Right ventricle myocardium superior (tissue), 1 donor: ENCODE measurements at regions of chr1 and their contacts with region 1.

Region 1: GRCh38 chr1:51044834-51045233 is 57.2 kb upstream of the C1orf185 start:
- DNase-seq: no peak
- ATAC-seq: no peak

Region 2: DNA sequence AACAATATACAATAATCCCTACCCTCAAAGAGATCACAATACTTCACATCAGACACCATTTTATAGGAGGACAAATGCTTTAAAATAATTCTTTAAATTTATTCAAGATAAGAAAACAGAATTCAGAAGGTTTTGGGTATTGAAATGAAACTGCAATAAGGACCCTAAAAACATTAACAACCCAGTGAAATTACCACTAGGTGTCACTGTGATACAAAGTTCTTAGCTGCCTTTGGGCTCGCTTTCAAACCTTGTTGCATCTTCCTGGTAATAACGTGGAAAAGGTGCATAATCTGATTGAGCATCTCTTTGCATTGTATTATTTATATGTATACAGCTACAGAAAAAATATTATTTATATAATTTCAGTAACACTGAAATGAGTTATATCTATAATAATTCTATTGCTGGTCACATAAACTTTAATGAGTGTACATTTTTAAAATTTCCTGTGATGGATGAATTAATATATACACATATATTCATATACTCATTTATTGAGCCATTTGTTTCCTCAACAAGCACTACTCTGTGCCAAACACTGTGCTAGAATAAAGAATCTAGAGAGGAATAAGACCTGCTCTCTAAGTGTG is 270.0 kb before region 1 on chr1:
- intact Hi-C with region 1: loop called (anchors 5 kb)
- DNase-seq: no peak
- ATAC-seq: peak; percentile 61

Region 3: DNA sequence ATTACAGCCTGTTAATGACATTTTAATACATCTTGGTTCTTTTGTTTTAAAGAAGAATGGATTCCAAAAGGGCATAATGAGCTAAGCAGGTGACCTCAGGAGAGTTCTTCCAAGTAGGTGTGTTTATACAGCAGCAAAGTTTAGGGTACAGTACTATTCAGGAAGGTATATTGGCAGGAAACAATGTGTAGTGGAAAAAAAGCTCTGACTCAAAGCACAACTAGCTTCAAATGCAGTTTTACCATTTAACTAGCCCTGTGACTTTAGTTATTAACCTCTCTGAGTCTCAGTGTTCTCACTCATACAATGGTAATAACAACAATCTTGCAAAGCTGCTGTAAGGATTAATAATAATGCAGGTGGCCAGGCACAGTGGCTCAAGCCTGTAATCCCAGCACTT is 114.6 kb before region 1 on chr1:
- intact Hi-C with region 1: loop called (anchors 5 kb)
- DNase-seq: no peak
- ATAC-seq: no peak

Region 4: GRCh38 chr1:51131185-51131584 is 86.4 kb after region 1 on chr1:
- intact Hi-C with region 1: no loop called
- DNase-seq: no peak
- ATAC-seq: no peak

Region 5: GRCh38 chr1:51264451-51264850 is 219.6 kb after region 1 on chr1:
- intact Hi-C with region 1: no loop called
- DNase-seq: no peak
- ATAC-seq: peak; percentile 48

Region 6: DNA sequence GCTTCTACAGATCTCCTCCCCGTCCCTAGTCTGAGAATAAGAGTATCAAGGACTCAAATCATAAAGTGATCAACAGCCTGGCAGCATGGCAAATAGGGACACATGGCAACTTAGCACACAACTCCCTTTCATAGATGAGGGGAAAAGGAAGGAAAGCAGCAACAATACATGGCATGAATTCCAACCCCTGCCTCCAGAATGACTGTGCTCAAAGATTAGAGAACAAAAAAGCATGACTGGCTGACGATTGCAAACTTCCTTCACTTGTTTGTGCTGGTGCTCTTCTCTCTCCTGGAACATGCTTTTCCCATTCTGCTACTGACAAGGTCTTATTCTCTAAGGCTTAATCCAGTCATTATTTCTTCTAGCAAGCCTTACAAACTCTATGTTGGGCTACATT is 977.3 kb after region 1 on chr1:
- intact Hi-C with region 1: no loop called
- DNase-seq: no peak
- ATAC-seq: no peak